Sciatic nerve (tissue), 2 donors: ENCODE measurements at regions of chr13 and their contacts with region 1.

Region 1: DNA sequence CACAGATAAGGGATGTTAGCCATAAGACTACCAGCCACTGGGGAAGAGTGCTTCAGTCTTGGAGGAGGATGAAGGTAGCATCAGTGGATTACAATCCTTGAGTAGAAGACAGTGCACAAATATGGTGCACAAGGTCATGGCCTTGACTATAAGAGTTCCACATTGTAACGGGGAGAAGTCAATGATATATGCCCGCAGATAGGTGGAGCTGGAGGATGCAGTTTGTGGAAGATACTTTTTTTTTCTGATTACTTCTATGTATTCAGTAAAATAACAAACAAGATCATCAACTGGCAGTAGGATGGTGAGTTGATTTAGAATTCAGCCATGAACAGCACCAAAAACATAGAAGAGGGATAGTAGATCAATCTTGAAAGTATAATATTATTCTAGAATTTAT is 926.8 kb upstream of the MIR17HG start:
- DNase-seq: no peak
- ATAC-seq: no peak

Region 2: GRCh38 chr13:90545070-90545840 is 124.6 kb after region 1 on chr13:
- intact Hi-C with region 1: no loop called
- DNase-seq: no peak
- ATAC-seq: no peak

Region 3: GRCh38 chr13:91216928-91217690 is 796.4 kb after region 1 on chr13:
- intact Hi-C with region 1: loop called (anchors 10 kb)
- DNase-seq: no peak
- ATAC-seq: no peak